ENCODE measurements at regions of chrX and their contacts with region 1.

Region 1: GRCh38 chrX:154308108-154308946 is 12.7 kb downstream of the TKTL1 start:
- DNase-seq: peak; percentile 53
- H3K4me3 ChIP-seq: no peak overlapping the region
- H3K27ac ChIP-seq: no peak overlapping the region
- H3K4me1 ChIP-seq: no peaks in the 10 kb centered on the region
- H3K27me3 ChIP-seq: no peaks in the 10 kb centered on the region
- CTCF ChIP-seq: peak; percentile 59 to 68
- POLR2A ChIP-seq: no peak

Region 2: DNA sequence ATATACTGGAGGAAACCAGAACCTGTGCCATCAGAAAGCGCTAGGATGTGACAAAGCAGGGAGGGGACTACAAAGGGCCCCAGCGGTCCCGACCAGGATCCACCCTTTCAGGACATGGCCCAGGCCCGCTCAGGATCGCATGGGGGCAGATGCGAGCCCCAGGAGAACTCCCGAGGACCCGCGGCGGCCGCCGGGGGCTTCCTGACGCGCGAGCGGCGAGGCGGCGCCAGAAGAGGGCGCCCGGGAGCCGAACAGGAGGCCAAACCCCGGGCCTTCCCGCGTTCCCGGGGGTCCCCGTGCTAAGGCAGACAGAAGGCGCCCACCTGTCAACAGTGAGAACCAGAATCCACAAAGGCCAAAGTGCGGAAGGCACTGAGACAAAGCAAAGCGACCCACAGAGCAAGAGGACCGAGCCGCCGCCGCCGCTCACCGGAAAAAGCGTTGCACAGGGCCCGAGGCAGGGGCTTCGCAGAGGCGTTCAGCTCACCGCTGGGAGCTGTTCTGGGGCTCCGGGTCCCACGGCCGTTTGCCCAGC is 171.6 kb before region 1 on chrX:
- CTCF ChIA-PET with region 1: interaction called, 20 read pairs
- POLR2A ChIA-PET with region 1: no interaction called
- dilution Hi-C with region 1: no loop called
- intact Hi-C with region 1: no loop called
- DNase-seq: peak; percentile 54
- H3K4me3 ChIP-seq: peak overlapping the region in 1 of 3 experiments; percentile 21
- H3K27ac ChIP-seq: peak overlapping the region; percentile 13
- H3K4me1 ChIP-seq: peaks cover 13% of the 10 kb centered on the region
- H3K27me3 ChIP-seq: no peaks in the 10 kb centered on the region
- CTCF ChIP-seq: peak; percentile 76 to 78
- POLR2A ChIP-seq: no peak

Measured in endothelial cell of umbilical vein (primary cell).